Naive thymus-derived CD8-positive, alpha-beta T cell (primary cell): ENCODE measurements at regions of chr4 and their contacts with region 1.

Region 1: GRCh38 chr4:77862478-77863216 is at the start of gene MRPL1:
- DNase-seq: peak in 9 of 10 donors; percentile 75 to 93 (median 89)
- ATAC-seq: peak; percentile 78 to 83
- H3K4me3 Mint-ChIP-seq: peak within 1 kb of the TSS; percentile 93 to 99 (median 97)
- H3K27ac Mint-ChIP-seq: peak within 1 kb of the TSS; percentile 96 to 100 (median 100)
- H3K4me1 Mint-ChIP-seq: peaks cover 27 to 74% (median 68%) of the 10 kb centered on the region in 4 donors
- H3K27me3 Mint-ChIP-seq: peaks cover 0 to 3% (median 0%) of the 10 kb centered on the region in 5 donors
- polyA plus RNA-seq, gene MRPL1: 35.6 to 37.9 (median 37.1) TPM

Region 2: GRCh38 chr4:77715414-77716290 is 147.0 kb before region 1 on chr4:
- POLR2A ChIA-PET with region 1: no interaction called
- DNase-seq: no peak
- ATAC-seq: no peak
- H3K4me3 Mint-ChIP-seq: no peak overlapping the region
- H3K27ac Mint-ChIP-seq: peak overlapping the region in 6 of 10 donors; percentile 23 to 83 (median 56)
- H3K4me1 Mint-ChIP-seq: peaks cover 0 to 20% (median 15%) of the 10 kb centered on the region in 4 donors
- H3K27me3 Mint-ChIP-seq: no peaks in the 10 kb centered on the region

Region 3: GRCh38 chr4:77800483-77801259 is 62.0 kb before region 1 on chr4:
- POLR2A ChIA-PET with region 1: interaction called, 21 read pairs
- DNase-seq: no peak
- ATAC-seq: peak; percentile 26 to 34
- H3K4me3 Mint-ChIP-seq: peak overlapping the region; percentile 57 to 86 (median 74)
- H3K27ac Mint-ChIP-seq: peak overlapping the region; percentile 45 to 97 (median 72)
- H3K4me1 Mint-ChIP-seq: peaks cover 35 to 97% (median 77%) of the 10 kb centered on the region in 4 donors
- H3K27me3 Mint-ChIP-seq: no peaks in the 10 kb centered on the region